Mammary epithelial cell (primary cell): ENCODE measurements at regions of chr1 and their contacts with region 1.

Region 1: GRCh38 chr1:8607906-8608305 is 209.5 kb downstream of the RERE start:
- DNase-seq: no peak
- H3K4me3 ChIP-seq: no peak overlapping the region
- H3K27ac ChIP-seq: no peak overlapping the region
- H3K4me1 ChIP-seq: no peaks in the 10 kb centered on the region
- H3K27me3 ChIP-seq: no peaks in the 10 kb centered on the region
- CTCF ChIP-seq: no peak

Region 2: DNA sequence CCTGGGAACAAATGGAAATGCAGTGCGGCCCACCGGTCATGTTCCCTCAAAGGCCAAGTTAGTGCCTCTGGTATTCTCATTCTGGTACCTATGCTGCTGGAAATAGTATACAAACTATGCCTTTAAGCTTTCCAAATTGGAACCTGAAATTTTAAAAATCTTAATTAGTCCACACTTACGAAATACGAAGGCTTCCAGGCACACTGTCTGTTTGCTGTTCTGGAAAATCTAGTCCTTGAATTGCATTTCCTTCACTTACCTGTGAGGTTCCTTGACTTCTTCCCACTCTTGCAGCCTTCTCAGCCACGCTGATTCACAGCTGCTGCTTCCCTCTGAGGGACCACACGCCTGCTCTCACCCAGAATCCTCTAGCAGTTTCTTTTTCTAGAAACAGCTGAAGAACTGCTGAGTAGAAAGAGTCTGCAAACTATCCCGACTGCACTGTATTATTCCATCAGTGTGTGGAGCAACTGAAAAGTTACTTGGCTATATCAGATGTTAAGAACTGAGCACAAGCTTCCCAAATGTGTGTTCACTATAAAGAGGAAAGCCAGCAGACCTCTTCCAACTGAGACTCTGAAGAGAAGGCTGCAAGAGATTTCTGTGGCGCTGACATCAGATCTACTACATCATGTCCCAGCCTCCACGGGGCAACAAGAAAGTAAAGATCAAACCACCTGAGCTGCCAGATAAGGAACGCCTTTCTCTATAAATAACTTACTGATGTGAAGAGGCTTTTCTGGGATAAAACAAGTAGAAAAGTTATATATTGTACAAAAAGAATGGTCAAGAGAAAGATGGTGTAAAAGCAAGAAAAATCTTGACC is 17.2 kb before region 1 on chr1:
- CTCF ChIA-PET with region 1: no interaction called
- dilution Hi-C with region 1: no loop called
- in situ Hi-C with region 1: no loop called
- intact Hi-C with region 1: loop called (anchors 2 kb)
- DNase-seq: no peak
- H3K4me3 ChIP-seq: no peak overlapping the region
- H3K27ac ChIP-seq: no peak overlapping the region
- H3K4me1 ChIP-seq: no peaks in the 10 kb centered on the region
- H3K27me3 ChIP-seq: no peaks in the 10 kb centered on the region
- CTCF ChIP-seq: no peak